PC-3 (cell line): ENCODE measurements at regions of chr1 and their contacts with region 1.

Region 1: DNA sequence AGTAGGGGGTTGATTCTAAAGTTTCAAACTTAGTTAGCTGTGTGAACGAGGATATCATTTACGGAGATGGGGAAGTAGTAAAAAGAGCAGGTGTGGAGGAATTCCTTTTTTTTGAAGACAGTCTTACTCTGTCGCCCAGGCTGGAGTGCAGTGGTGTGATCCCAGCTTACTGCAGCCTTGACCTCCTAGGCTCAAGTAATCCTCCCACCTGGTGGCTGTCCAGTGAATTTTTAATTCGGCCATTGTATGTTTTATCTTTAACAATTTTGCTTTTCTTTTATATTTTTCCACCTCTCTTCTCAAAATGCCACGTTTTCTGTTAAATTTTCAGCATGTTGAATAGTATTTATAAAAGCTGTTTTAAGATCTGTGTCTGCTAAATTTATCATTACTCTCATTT is 12.3 kb upstream of the CENPF start:
- DNase-seq: peak; percentile 46
- ATAC-seq: peak; percentile 68
- H3K4me3 ChIP-seq: no peak overlapping the region
- H3K27ac ChIP-seq: no peak overlapping the region
- H3K4me1 ChIP-seq: no peaks in the 10 kb centered on the region
- H3K27me3 ChIP-seq: no peaks in the 10 kb centered on the region
- CTCF ChIP-seq: peak; percentile 61

Region 2: GRCh38 chr1:214328770-214329469 is 261.8 kb before region 1 on chr1:
- CTCF ChIA-PET with region 1: interaction called, 36 read pairs
- POLR2A ChIA-PET with region 1: no interaction called
- intact Hi-C with region 1: loop called (anchors 1 kb)
- DNase-seq: peak; percentile 96
- ATAC-seq: peak; percentile 93
- H3K4me3 ChIP-seq: no peak overlapping the region
- H3K27ac ChIP-seq: no peak overlapping the region
- H3K4me1 ChIP-seq: peaks cover 4% of the 10 kb centered on the region
- H3K27me3 ChIP-seq: no peaks in the 10 kb centered on the region
- CTCF ChIP-seq: peak; percentile 96